HEK293T (cell line): ENCODE measurements at regions of chr13 and their contacts with region 1.

Region 1: DNA sequence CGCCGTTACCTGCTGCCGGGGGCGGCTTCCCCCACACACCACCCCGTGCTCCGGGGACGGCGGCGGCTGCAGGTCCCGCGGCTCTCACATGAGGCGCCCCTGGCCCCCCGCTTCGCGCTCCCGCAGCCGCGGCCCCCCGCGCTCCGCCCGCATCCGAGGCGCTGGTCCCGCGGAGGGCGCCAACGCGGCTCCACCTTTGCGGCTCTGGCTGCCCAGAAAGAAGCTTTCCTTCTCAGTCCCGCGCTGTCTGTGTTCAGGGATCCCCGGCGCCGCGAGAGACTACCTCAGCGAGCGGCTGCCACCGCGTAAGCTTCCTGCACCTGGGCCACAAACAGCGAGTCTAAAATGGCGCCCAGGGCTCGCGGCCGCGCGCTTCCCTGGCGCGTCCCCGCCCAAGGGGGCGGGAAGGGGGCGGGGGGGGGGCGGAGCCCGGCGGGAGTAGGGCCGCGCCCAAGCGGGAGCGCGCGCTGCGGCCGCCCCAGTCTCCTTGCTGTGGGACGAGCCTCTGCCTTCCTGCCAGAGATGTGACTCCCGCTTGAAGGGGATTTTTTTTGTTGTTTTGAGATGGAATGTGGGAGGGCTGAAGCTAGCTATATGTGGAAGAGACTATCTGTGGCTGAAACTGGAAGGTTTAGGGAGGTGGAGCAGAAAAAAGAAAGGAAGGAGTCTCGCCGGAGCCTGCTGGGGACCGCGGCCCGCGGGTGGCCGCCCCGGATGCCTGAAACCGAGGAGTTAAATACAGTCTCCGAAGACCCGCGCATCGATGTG is at the start of gene FBXL3:
- DNase-seq: peak; percentile 99

Region 2: DNA sequence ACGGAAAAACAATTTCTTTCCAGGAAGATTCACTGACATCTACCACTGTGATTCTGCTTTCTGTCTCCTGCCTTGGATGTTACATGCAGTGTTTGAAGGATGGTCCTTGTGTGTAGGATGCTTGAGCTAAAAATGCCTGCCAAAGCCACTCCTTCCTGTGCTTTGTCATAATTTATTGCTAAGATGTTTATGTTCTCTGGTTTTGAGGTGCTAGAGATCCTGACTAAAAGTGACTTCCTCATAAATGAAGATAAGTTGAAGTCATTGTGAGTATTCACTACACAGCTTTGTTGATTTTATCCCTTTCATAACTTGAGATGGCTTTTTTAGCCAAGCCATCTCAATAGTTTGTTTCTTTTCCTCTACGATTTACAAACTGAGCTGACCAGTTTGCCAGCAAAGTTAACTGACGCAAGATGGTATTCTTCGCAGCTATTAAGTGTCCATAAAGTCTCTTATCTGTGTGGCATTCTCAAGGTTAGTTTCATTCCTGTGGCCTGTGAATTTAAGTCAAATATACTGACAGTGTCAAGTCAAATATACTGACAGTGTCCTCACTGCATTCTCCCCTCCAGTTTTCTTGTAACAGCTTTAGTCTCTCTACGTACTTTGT is 15.7 kb after region 1 on chr13:
- CTCF ChIA-PET with region 1: interaction called, 4 read pairs
- POLR2A ChIA-PET with region 1: interaction called, 21 read pairs
- DNase-seq: no peak

Region 3: DNA sequence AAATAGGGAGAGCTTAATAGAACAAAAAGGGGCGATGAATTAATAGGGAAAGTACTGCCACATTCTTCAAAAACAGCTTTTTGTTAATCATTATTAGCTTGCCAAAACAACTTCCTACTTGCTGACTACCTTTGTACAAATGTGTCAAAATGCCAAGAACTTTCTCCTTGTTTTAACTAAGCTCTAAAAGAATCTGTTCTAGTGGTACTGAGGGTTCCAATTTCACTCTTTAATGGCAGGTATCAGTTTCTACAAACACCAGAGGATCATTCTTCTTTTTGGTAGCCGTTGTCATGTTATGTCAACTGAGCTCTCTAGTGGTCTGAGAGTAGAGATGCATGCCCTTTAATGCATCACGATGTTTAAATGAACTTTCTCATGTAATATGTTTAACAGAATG is 29.4 kb after region 1 on chr13:
- CTCF ChIA-PET with region 1: no interaction called
- POLR2A ChIA-PET with region 1: interaction called, 13 read pairs
- DNase-seq: no peak